Body of pancreas (tissue), 4 donors: ENCODE measurements at regions of chr6 and their contacts with region 1.

Region 1: DNA sequence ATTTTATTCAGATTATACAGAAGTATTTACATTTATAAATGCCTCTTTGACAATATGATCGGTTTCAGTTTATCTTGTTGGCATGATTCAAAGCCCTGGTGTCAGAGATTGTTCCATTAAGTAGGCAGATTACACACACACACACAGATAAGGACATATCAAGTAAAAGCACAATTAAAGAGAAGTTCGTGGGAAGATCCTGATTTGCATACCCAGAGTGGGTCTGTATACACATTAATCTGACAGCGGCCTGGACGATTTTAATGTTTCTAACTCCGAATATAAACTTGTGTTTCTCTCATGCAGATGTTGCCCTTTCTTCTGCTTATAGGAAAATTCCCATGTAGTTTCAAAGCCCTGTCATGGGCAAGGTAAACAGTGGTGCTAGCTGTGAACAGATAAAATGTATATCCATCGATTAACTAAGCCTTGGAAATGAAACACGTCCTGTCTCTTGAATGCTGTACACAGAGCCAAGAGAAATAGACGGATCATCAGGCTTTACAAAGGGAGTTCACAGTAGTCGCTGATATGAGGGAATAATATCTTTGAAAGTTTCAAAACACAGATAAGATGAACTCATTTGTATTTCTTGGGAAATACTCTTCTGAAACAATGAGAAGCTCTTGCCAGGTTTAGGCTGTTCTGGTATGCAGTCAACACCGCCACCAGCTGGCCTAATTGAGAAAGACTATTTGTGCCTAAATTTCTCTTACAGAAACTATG is 108.2 kb upstream of the GMDS start:
- DNase-seq: peak; percentile 79 to 83 (median 82)
- ATAC-seq: peak; percentile 93
- H3K4me3 ChIP-seq: no peak overlapping the region
- H3K27ac ChIP-seq: peak overlapping the region; percentile 8 to 54 (median 34)
- H3K4me1 ChIP-seq: peaks cover 18% of the 10 kb centered on the region
- H3K27me3 ChIP-seq: no peaks in the 10 kb centered on the region
- CTCF ChIP-seq: peak in 6 of 7 experiments; percentile 55 to 92 (median 84)
- POLR2A ChIP-seq: no peak

Region 2: GRCh38 chr6:1604158-1605030 is 749.2 kb before region 1 on chr6:
- intact Hi-C with region 1: loop called (anchors 5 kb)
- DNase-seq: peak; percentile 54 to 76 (median 72)
- ATAC-seq: peak; percentile 84
- H3K4me3 ChIP-seq: peak overlapping the region in 1 of 2 donors; percentile 20
- H3K27ac ChIP-seq: no peak overlapping the region
- H3K4me1 ChIP-seq: peaks cover 45% of the 10 kb centered on the region
- H3K27me3 ChIP-seq: peaks cover 0 to 41% of the 10 kb centered on the region in 2 donors
- CTCF ChIP-seq: peak; percentile 62 to 97 (median 95)
- POLR2A ChIP-seq: no peak

Region 3: GRCh38 chr6:2209226-2209809 is 144.3 kb before region 1 on chr6:
- intact Hi-C with region 1: loop called (anchors 10 kb)
- DNase-seq: peak; percentile 83 to 88 (median 85)
- ATAC-seq: peak; percentile 97
- H3K4me3 ChIP-seq: no peak overlapping the region
- H3K27ac ChIP-seq: no peak overlapping the region
- H3K4me1 ChIP-seq: peaks cover 8% of the 10 kb centered on the region
- H3K27me3 ChIP-seq: no peaks in the 10 kb centered on the region
- CTCF ChIP-seq: peak; percentile 19 to 89 (median 85)
- POLR2A ChIP-seq: no peak